ENCODE measurements at regions of chr11 and their contacts with region 1.

Region 1: GRCh38 chr11:66480117-66480938 is at the start of gene DPP3:
- DNase-seq: peak; percentile 91
- ATAC-seq: peak; percentile 98
- H3K4me3 Mint-ChIP-seq: peak within 1 kb of the TSS; percentile 90
- H3K27ac Mint-ChIP-seq: peak within 1 kb of the TSS; percentile 87
- H3K4me1 Mint-ChIP-seq: peaks cover 22% of the 10 kb centered on the region
- H3K27me3 Mint-ChIP-seq: no peaks in the 10 kb centered on the region
- CTCF ChIP-seq: no peak
- total RNA-seq, gene DPP3: 62.2 and 63.3 TPM in 2 replicates

Region 2: DNA sequence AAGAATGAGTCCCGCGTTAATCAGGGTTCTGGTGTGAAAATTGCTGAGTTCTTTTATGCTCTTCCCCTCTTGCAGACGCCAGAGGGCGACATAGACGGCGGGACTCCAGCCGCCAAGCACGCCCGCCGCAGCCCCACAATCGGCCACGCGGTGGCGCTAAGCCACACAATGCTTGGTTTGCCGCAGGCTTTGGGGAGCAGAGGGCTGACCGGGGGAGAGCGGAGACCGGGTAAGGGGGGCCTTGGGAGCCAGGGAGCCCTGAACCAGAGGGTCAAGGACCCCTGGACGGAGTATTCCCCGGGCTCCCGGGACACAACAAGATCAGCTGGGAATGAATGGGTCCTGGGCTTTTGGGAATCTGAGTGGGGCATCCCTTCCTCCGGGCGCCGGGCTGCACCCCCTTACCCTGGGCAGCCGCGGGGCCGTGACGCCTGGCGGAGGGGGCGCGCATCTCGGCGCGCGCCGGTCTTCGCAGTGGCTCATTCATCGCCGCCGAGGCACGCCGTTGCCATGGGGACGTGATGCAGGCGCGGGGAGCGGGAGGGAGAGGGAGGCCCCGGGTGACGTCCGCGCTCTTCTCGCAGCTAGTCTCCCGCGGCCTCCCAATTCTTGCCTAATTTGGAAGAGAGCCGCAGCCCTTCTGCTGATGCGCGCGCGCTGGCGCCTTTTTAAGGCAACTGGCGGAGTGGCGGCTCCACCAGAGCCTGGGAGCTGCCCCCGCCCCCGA is 71.7 kb before region 1 on chr11:
- CTCF ChIA-PET with region 1: interaction called, 27 read pairs
- POLR2A ChIA-PET with region 1: interaction called, 4 read pairs
- intact Hi-C with region 1: loop called (anchors 1 kb)
- DNase-seq: peak; percentile 88
- ATAC-seq: peak; percentile 92
- H3K4me3 Mint-ChIP-seq: peak overlapping the region; percentile 73
- H3K27ac Mint-ChIP-seq: no peak overlapping the region
- H3K4me1 Mint-ChIP-seq: peaks cover 4% of the 10 kb centered on the region
- H3K27me3 Mint-ChIP-seq: peaks cover 44% of the 10 kb centered on the region
- CTCF ChIP-seq: peak; percentile 96

Region 3: DNA sequence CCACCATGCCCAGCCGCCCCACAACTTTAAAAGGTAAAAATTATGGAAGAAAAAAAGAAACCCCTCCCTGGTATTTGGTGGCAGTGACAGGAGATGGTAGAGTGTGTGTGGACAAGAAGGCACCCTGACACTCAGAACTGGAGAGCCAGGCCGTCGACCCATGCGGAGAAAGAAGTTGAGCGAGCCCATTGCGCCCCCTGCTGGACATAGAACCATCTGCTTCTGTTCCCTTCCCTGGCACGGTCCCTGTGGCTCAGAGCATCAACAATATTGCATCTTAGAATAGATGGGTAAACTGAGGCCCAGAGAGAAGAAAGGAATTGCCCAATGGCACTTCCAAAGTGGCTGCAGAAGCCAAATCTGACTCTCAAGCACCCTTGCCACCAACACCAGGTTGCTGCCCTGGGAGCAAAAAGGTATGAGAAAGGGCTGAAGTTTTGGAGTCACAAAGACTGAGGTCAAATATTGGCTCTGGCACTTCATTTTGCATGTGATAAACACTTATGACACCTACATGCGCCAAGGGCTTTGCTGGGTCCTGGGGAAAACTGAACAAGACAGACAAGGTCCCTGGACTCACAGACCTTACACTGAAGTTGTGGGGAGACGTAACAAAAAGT is 50.2 kb before region 1 on chr11:
- CTCF ChIA-PET with region 1: interaction called, 5 read pairs
- POLR2A ChIA-PET with region 1: interaction called, 7 read pairs
- intact Hi-C with region 1: loop called (anchors 1 kb)
- DNase-seq: peak; percentile 44
- ATAC-seq: peak; percentile 70
- H3K4me3 Mint-ChIP-seq: no peak overlapping the region
- H3K27ac Mint-ChIP-seq: no peak overlapping the region
- H3K4me1 Mint-ChIP-seq: no peaks in the 10 kb centered on the region
- H3K27me3 Mint-ChIP-seq: no peaks in the 10 kb centered on the region
- CTCF ChIP-seq: no peak

Region 4: DNA sequence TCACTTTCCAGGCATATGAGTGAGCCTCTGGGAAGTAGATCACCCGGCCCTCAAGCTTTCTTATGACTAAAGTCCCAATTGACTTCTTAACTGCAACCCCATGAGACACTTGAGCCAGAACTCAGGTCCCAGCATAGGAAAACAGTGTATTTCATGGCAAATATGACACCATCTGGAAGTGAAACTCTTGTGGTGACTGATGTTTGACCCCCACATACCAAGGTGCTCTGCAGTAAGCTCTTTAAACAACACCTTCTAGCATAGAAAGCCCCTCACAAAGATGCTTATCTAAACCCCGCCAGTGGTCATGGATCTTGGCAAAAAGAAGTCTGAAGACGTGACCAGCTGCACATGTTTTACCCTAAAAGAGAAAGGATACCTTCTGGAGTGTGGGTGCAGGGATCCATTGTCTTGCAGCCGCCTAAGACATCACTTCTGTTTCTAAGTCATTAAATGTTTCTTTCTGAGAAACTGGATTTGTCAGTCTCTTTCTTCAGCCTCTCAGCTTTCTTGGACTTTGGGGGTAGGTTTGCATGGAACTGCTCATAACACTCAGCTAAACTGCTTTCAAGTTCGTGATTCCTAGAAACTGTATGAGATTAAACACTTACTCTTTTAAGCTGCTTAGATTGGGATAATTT is 21.1 kb before region 1 on chr11:
- CTCF ChIA-PET with region 1: interaction called, 6 read pairs
- POLR2A ChIA-PET with region 1: interaction called, 15 read pairs
- intact Hi-C with region 1: no loop called
- DNase-seq: no peak
- ATAC-seq: peak; percentile 64
- H3K4me3 Mint-ChIP-seq: peak overlapping the region; percentile 55
- H3K27ac Mint-ChIP-seq: peak overlapping the region; percentile 79
- H3K4me1 Mint-ChIP-seq: peaks cover 48% of the 10 kb centered on the region
- H3K27me3 Mint-ChIP-seq: peaks cover 2% of the 10 kb centered on the region
- CTCF ChIP-seq: no peak

Region 5: GRCh38 chr11:66510271-66510989 is 30.1 kb after region 1 on chr11 and contains the start of gene BBS1:
- CTCF ChIA-PET with region 1: interaction called, 3 read pairs
- POLR2A ChIA-PET with region 1: interaction called, 10 read pairs
- intact Hi-C with region 1: loop called (anchors 1 kb)
- DNase-seq: peak; percentile 82
- ATAC-seq: peak; percentile 98
- H3K4me3 Mint-ChIP-seq: peak within 1 kb of the TSS; percentile 91
- H3K27ac Mint-ChIP-seq: peak within 1 kb of the TSS; percentile 42
- H3K4me1 Mint-ChIP-seq: peaks cover 14% of the 10 kb centered on the region
- H3K27me3 Mint-ChIP-seq: no peaks in the 10 kb centered on the region
- CTCF ChIP-seq: no peak
- total RNA-seq, gene BBS1: 30.5 and 38.8 TPM in 2 replicates

Region 6: GRCh38 chr11:66607126-66607834 is 127.0 kb after region 1 on chr11:
- CTCF ChIA-PET with region 1: no interaction called
- POLR2A ChIA-PET with region 1: interaction called, 11 read pairs
- intact Hi-C with region 1: no loop called
- DNase-seq: no peak
- ATAC-seq: no peak
- H3K4me3 Mint-ChIP-seq: no peak overlapping the region
- H3K27ac Mint-ChIP-seq: peak overlapping the region; percentile 80
- H3K4me1 Mint-ChIP-seq: peaks cover 42% of the 10 kb centered on the region
- H3K27me3 Mint-ChIP-seq: no peaks in the 10 kb centered on the region
- CTCF ChIP-seq: no peak

Measured in activated B cell treated with CpG ODN at 0.5 μM for 24 hours (primary cell).